ENCODE measurements at regions of chr6 and their contacts with region 1.

Region 1: GRCh38 chr6:152863618-152864326 is 113.2 kb downstream of the VIP start:
- DNase-seq: peak in 1 of 2 donors; percentile 65
- ATAC-seq: peak; percentile 74
- H3K4me3 ChIP-seq: no peak overlapping the region
- H3K27ac ChIP-seq: no peak overlapping the region
- H3K4me1 ChIP-seq: no peaks in the 10 kb centered on the region
- H3K27me3 ChIP-seq: no peaks in the 10 kb centered on the region

Region 2: GRCh38 chr6:152948150-152948768 is 84.5 kb after region 1 on chr6:
- intact Hi-C with region 1: loop called (anchors 2 to 10 kb)
- DNase-seq: no peak
- ATAC-seq: peak; percentile 76
- H3K4me3 ChIP-seq: peak overlapping the region; percentile 26 to 47
- H3K27ac ChIP-seq: no peak overlapping the region
- H3K4me1 ChIP-seq: no peaks in the 10 kb centered on the region
- H3K27me3 ChIP-seq: no peaks in the 10 kb centered on the region

Region 3: DNA sequence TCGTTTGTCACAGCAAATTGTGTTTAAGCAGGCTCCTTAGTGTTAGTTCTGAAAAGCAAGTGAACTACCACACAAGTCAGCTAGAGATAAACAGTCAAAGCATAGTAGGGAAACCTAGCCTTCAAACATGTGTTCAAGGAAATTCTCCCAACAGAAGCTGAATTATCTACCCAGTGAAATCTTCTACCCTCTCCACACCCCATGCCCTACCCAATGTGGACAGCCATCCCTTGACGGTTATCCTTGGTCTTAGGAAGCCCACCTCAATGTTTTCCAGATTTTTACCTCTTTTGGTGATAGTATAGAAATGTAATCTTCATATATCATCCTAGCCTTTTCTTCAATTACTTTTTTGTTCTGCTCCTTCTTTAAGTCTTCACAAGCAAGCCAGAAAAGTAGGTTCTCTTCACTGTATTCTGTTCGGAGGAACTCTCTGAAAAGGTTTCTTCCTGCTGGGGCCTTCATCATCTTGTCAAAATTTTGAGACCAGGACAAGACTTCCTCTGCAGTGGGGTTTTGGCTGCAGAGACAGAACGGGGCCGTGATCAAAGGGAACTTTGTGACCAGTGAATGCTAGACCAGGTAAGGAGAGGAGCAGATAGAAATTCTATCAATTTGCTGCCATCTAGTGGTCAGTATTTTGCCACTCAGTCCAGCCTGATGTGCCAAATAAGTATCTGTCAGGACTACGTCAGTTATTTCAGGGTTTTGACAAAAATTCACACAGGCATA is 160.4 kb after region 1 on chr6:
- intact Hi-C with region 1: loop called (anchors 2 to 5 kb)
- DNase-seq: no peak
- ATAC-seq: peak; percentile 85
- H3K4me3 ChIP-seq: no peak overlapping the region
- H3K27ac ChIP-seq: no peak overlapping the region
- H3K4me1 ChIP-seq: no peaks in the 10 kb centered on the region
- H3K27me3 ChIP-seq: no peaks in the 10 kb centered on the region

Measured in aorta (tissue), 5 donors.